CD4-positive, alpha-beta T cell (primary cell): ENCODE measurements at regions of chr4 and their contacts with region 1.

Region 1: GRCh38 chr4:7939377-7940108 is at the start of gene AFAP1:
- DNase-seq: peak; percentile 79 to 96 (median 90)
- ATAC-seq: peak; percentile 93
- H3K4me3 ChIP-seq: peak within 1 kb of the TSS; percentile 75
- H3K4me3 Mint-ChIP-seq: peak within 1 kb of the TSS; percentile 75
- H3K27ac ChIP-seq: peak within 1 kb of the TSS in 1 of 2 donors; percentile 46
- H3K27ac Mint-ChIP-seq: no peak within 1 kb of the TSS
- H3K4me1 ChIP-seq: peaks cover 19% of the 10 kb centered on the region
- H3K4me1 Mint-ChIP-seq: peaks cover 41% of the 10 kb centered on the region
- H3K27me3 ChIP-seq: no peaks in the 10 kb centered on the region
- H3K27me3 Mint-ChIP-seq: peaks cover 19% of the 10 kb centered on the region
- CTCF ChIP-seq: no peak
- total RNA-seq, gene AFAP1: 9.8 to 10.9 TPM

Region 2: DNA sequence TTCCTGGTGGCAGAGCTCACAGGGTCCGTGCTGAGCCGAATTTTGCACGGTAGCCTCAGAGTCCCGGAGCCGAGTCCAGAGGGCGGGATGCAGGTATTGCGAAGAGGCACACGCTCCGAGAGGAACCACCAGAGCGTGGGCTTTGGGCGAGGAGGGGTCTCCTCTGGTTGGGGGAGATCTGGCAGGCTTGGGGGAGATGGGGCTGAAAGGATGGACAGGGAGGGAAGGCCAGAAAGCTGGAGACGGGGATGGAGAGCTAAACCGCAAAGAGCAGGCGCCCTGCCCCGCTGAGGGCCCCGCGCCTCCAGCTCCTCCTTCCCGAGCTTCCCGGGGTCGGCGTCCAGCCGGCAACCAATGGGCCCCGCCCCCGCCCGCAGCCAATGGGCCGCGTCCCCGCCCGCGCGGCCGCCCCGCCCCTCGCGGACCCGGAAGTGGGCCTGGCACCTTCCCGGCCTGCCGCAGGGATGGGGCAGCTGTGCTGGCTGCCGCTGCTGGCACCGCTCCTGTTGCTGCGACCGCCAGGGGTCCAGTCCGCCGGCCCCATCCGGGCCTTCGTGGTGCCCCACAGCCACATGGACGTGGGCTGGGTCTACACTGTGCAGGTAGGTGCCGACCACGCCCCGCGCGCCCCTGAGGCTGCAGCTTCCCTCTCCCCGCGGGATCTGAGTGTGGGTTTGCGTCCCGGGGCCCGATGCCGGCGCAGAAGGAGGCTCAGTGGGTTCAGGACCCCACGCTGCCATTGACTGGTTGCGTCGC is 1364.6 kb before region 1 on chr4 and contains the start of gene MAN2B2:
- CTCF ChIA-PET with region 1: no interaction called
- POLR2A ChIA-PET with region 1: no interaction called
- intact Hi-C with region 1: loop called in 1 of 2 experiments (anchors 10 kb)
- DNase-seq: peak; percentile 51 to 89 (median 80)
- ATAC-seq: peak; percentile 93
- H3K4me3 ChIP-seq: peak within 1 kb of the TSS; percentile 98
- H3K4me3 Mint-ChIP-seq: peak within 1 kb of the TSS; percentile 93
- H3K27ac ChIP-seq: peak within 1 kb of the TSS; percentile 55 to 74
- H3K27ac Mint-ChIP-seq: peak within 1 kb of the TSS; percentile 79
- H3K4me1 ChIP-seq: peaks cover 30% of the 10 kb centered on the region
- H3K4me1 Mint-ChIP-seq: peaks cover 4% of the 10 kb centered on the region
- H3K27me3 ChIP-seq: no peaks in the 10 kb centered on the region
- H3K27me3 Mint-ChIP-seq: no peaks in the 10 kb centered on the region
- CTCF ChIP-seq: no peak
- total RNA-seq, gene MAN2B2: 25.9 to 28.5 TPM

Region 3: DNA sequence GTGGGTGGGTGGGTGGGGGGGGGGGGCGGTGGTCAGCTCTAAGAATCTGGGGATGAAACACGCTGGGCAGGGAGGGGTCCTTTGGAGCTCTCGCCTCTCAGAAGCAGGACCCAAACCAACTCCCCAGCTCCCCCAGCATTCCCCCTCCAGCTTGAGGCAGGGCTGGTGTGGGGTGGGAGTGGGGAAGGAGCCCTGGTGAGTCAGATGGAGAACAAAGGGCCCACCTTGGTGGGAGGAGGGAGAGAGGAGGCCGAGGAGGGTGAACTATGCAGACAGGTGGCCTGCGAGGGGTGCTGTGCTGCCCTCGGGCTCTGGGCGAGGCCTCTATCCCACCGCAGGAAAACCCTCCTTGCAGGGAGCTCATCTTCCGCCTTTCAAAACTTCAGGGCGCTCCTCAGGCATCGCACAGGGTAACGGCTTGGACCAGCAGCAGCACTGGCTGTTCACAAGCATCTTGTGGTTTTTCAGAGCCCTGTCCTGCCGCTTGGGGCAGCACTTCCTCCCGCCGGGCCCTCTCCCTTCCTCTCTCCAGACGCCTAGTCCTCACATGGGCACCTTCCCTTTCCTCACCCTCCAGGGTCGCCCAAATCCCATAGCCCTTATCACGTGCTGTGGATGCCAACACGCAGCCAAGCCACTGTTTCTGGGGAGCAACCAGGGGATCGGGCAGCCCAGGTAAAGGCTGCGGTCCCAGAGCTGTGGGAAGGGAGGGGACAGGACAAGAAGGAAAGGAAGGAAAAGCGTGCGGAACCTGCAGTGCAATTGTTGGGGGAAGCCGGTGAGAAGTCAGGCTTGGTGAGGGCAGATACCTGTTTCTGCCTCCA is 837.6 kb before region 1 on chr4:
- CTCF ChIA-PET with region 1: no interaction called
- POLR2A ChIA-PET with region 1: no interaction called
- intact Hi-C with region 1: loop called in 1 of 2 experiments (anchors 10 kb)
- DNase-seq: peak; percentile 18 to 73 (median 44)
- ATAC-seq: peak; percentile 35
- H3K4me3 ChIP-seq: peak overlapping the region; percentile 84
- H3K4me3 Mint-ChIP-seq: peak overlapping the region; percentile 84
- H3K27ac ChIP-seq: no peak overlapping the region
- H3K27ac Mint-ChIP-seq: peak overlapping the region; percentile 7
- H3K4me1 ChIP-seq: peaks cover 29% of the 10 kb centered on the region
- H3K4me1 Mint-ChIP-seq: peaks cover 16% of the 10 kb centered on the region
- H3K27me3 ChIP-seq: no peaks in the 10 kb centered on the region
- H3K27me3 Mint-ChIP-seq: no peaks in the 10 kb centered on the region
- CTCF ChIP-seq: peak; percentile 55

Region 4: DNA sequence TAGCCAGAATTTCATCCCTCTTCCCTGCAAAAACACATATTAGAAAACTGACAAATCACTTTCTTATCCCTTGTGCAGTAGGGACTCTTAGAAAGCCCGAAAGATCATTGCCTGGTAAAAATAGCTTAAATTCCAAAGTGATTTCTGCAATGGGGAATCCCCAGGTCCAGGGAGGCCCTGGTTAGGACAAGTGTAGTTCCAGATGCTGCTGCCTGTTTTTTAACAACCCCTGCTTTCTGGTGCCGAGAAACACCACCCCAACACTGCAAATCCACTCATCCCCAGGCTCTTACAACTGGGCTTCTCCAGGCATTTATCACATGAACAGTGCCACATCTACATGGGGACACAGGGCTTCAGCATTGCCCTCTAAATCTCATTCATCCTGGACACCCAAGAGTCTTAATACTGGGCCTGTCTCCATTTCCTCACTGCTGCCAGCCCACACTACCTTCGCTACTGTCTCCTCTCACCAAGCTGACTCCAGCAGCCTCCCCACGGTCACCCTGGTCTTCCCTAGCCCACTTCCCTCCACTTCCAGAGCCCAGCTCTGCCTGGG is 392.7 kb before region 1 on chr4:
- CTCF ChIA-PET with region 1: no interaction called
- POLR2A ChIA-PET with region 1: no interaction called
- intact Hi-C with region 1: no loop called
- DNase-seq: no peak
- ATAC-seq: no peak
- H3K4me3 ChIP-seq: no peak overlapping the region
- H3K4me3 Mint-ChIP-seq: no peak overlapping the region
- H3K27ac ChIP-seq: no peak overlapping the region
- H3K27ac Mint-ChIP-seq: no peak overlapping the region
- H3K4me1 ChIP-seq: no peaks in the 10 kb centered on the region
- H3K4me1 Mint-ChIP-seq: no peaks in the 10 kb centered on the region
- H3K27me3 ChIP-seq: peaks cover 0 to 2% of the 10 kb centered on the region in 2 experiments
- H3K27me3 Mint-ChIP-seq: peaks cover 17% of the 10 kb centered on the region
- CTCF ChIP-seq: no peak

Region 5: GRCh38 chr4:7863911-7864681 is 75.4 kb before region 1 on chr4:
- CTCF ChIA-PET with region 1: no interaction called
- POLR2A ChIA-PET with region 1: interaction called, 39 read pairs
- intact Hi-C with region 1: no loop called
- DNase-seq: peak in 2 of 14 experiments; percentile 38 to 46
- ATAC-seq: peak; percentile 54
- H3K4me3 ChIP-seq: no peak overlapping the region
- H3K4me3 Mint-ChIP-seq: peak overlapping the region; percentile 72
- H3K27ac ChIP-seq: no peak overlapping the region
- H3K27ac Mint-ChIP-seq: peak overlapping the region; percentile 70
- H3K4me1 ChIP-seq: peaks cover 8% of the 10 kb centered on the region
- H3K4me1 Mint-ChIP-seq: peaks cover 33% of the 10 kb centered on the region
- H3K27me3 ChIP-seq: no peaks in the 10 kb centered on the region
- H3K27me3 Mint-ChIP-seq: no peaks in the 10 kb centered on the region
- CTCF ChIP-seq: no peak

Region 6: GRCh38 chr4:7886007-7886973 is 53.3 kb before region 1 on chr4:
- CTCF ChIA-PET with region 1: no interaction called
- POLR2A ChIA-PET with region 1: no interaction called
- intact Hi-C with region 1: loop called in 1 of 2 experiments (anchors 5 kb)
- DNase-seq: no peak
- ATAC-seq: no peak
- H3K4me3 ChIP-seq: no peak overlapping the region
- H3K4me3 Mint-ChIP-seq: no peak overlapping the region
- H3K27ac ChIP-seq: no peak overlapping the region
- H3K27ac Mint-ChIP-seq: no peak overlapping the region
- H3K4me1 ChIP-seq: no peaks in the 10 kb centered on the region
- H3K4me1 Mint-ChIP-seq: peaks cover 39% of the 10 kb centered on the region
- H3K27me3 ChIP-seq: no peaks in the 10 kb centered on the region
- H3K27me3 Mint-ChIP-seq: no peaks in the 10 kb centered on the region
- CTCF ChIP-seq: no peak

Region 7: DNA sequence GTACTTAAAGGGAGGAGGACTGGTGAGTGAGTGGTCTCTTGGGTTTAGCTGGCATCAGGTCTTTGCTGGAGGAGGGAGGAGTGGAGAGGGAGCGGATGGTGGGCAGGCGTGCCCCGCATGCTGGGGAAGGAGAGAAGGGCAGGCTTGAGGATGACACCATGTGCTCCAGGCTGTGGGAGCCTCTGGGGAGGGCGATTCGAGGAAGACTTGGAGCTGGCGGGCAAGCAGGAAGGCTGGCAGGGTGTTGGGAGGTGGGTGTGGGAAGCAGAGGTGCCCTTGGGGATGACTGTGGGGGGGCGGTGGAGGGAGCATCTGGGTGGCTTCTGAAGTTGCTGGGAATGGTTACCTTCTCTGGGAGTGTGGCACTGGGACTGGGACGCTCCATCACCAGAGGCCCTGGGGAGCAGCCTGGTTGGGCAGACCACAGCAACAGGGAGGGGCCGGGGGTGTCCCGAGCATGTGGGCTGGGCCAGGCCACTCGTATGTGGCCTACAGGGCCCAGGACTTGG is 30.9 kb after region 1 on chr4:
- CTCF ChIA-PET with region 1: no interaction called
- POLR2A ChIA-PET with region 1: interaction called, 30 read pairs
- intact Hi-C with region 1: loop called in 1 of 2 experiments (anchors 2 kb)
- DNase-seq: no peak
- ATAC-seq: no peak
- H3K4me3 ChIP-seq: peak overlapping the region; percentile 75
- H3K4me3 Mint-ChIP-seq: peak overlapping the region; percentile 93
- H3K27ac ChIP-seq: peak overlapping the region; percentile 36 to 63
- H3K27ac Mint-ChIP-seq: peak overlapping the region; percentile 94
- H3K4me1 ChIP-seq: peaks cover 67% of the 10 kb centered on the region
- H3K4me1 Mint-ChIP-seq: peaks cover 46% of the 10 kb centered on the region
- H3K27me3 ChIP-seq: no peaks in the 10 kb centered on the region
- H3K27me3 Mint-ChIP-seq: no peaks in the 10 kb centered on the region
- CTCF ChIP-seq: no peak

Region 8: GRCh38 chr4:8158710-8159536 is 219.4 kb after region 1 on chr4 and contains the start of gene ABLIM2:
- CTCF ChIA-PET with region 1: no interaction called
- POLR2A ChIA-PET with region 1: no interaction called
- intact Hi-C with region 1: loop called in 1 of 2 experiments (anchors 5 kb)
- DNase-seq: peak; percentile 97 to 100 (median 99)
- ATAC-seq: peak; percentile 98
- H3K4me3 ChIP-seq: peak within 1 kb of the TSS; percentile 94
- H3K4me3 Mint-ChIP-seq: peak within 1 kb of the TSS; percentile 91
- H3K27ac ChIP-seq: no peak within 1 kb of the TSS
- H3K27ac Mint-ChIP-seq: peak within 1 kb of the TSS; percentile 67
- H3K4me1 ChIP-seq: peaks cover 28% of the 10 kb centered on the region
- H3K4me1 Mint-ChIP-seq: peaks cover 18% of the 10 kb centered on the region
- H3K27me3 ChIP-seq: peaks cover 0 to 7% of the 10 kb centered on the region in 2 experiments
- H3K27me3 Mint-ChIP-seq: no peaks in the 10 kb centered on the region
- CTCF ChIP-seq: no peak
- total RNA-seq, gene ABLIM2: 2.5 to 2.7 TPM